IMR-90 (cell line): ENCODE measurements at regions of chr4 and their contacts with region 1.

Region 1: GRCh38 chr4:77777135-77777807 is 41.9 kb downstream of the CNOT6L start:
- DNase-seq: peak; percentile 9
- ATAC-seq: peak; percentile 16; the same call in 1 of the 2 replicates
- H3K4me3 ChIP-seq: no peak overlapping the region
- H3K27ac ChIP-seq: no peak overlapping the region
- H3K4me1 ChIP-seq: peaks cover 6% of the 10 kb centered on the region
- H3K27me3 ChIP-seq: no peaks in the 10 kb centered on the region
- CTCF ChIP-seq: no peak
- POLR2A ChIP-seq: no peak
- RAD21 ChIP-seq: no peak

Region 2: GRCh38 chr4:77711469-77711868 is 65.8 kb before region 1 on chr4:
- CTCF ChIA-PET with region 1: no interaction called
- POLR2A ChIA-PET with region 1: no interaction called
- dilution Hi-C with region 1: no loop called
- in situ Hi-C with region 1: no loop called
- intact Hi-C with region 1: no loop called
- DNase-seq: no peak
- ATAC-seq: no peak
- H3K4me3 ChIP-seq: no peak overlapping the region
- H3K27ac ChIP-seq: no peak overlapping the region
- H3K4me1 ChIP-seq: no peaks in the 10 kb centered on the region
- H3K27me3 ChIP-seq: no peaks in the 10 kb centered on the region
- CTCF ChIP-seq: no peak
- POLR2A ChIP-seq: no peak
- RAD21 ChIP-seq: no peak

Region 3: GRCh38 chr4:77734928-77735327 is 42.3 kb before region 1 on chr4:
- CTCF ChIA-PET with region 1: no interaction called
- POLR2A ChIA-PET with region 1: interaction called, 10 read pairs
- dilution Hi-C with region 1: no loop called
- in situ Hi-C with region 1: no loop called
- intact Hi-C with region 1: no loop called
- DNase-seq: peak; percentile 79
- ATAC-seq: peak; percentile 84
- H3K4me3 ChIP-seq: no peak overlapping the region
- H3K27ac ChIP-seq: no peak overlapping the region
- H3K4me1 ChIP-seq: peaks cover 2% of the 10 kb centered on the region; the same call in 1 of the 2 replicates
- H3K27me3 ChIP-seq: no peaks in the 10 kb centered on the region
- CTCF ChIP-seq: no peak
- POLR2A ChIP-seq: no peak
- RAD21 ChIP-seq: no peak

Region 4: GRCh38 chr4:77797239-77797638 is 20.0 kb after region 1 on chr4:
- CTCF ChIA-PET with region 1: no interaction called
- POLR2A ChIA-PET with region 1: no interaction called
- dilution Hi-C with region 1: no loop called
- in situ Hi-C with region 1: no loop called
- intact Hi-C with region 1: loop called (anchors 2 kb)
- DNase-seq: no peak
- ATAC-seq: no peak
- H3K4me3 ChIP-seq: no peak overlapping the region
- H3K27ac ChIP-seq: no peak overlapping the region
- H3K4me1 ChIP-seq: peaks cover 4% of the 10 kb centered on the region; the same call in 1 of the 2 replicates
- H3K27me3 ChIP-seq: no peaks in the 10 kb centered on the region
- CTCF ChIP-seq: no peak
- POLR2A ChIP-seq: no peak
- RAD21 ChIP-seq: no peak

Region 5: DNA sequence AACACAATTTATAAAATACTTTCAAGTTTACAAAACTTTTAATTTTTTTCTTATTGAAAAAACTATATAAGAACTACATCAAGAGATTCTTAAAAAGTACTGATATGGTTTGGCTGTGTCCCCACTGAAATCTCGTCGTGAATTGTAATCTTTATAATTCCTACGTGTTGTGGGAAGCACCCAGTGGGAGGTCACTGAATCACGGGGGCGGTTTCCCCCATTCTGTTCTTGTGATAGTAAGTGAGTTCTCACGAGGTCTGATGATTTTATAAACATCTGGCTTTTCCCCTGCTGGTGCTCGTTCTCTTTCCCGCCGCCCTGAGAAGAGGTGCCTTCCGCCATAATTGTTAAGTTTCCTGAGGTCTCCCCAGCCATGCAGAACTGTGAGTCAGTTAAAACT is 368.4 kb after region 1 on chr4:
- CTCF ChIA-PET with region 1: no interaction called
- POLR2A ChIA-PET with region 1: no interaction called
- dilution Hi-C with region 1: no loop called
- in situ Hi-C with region 1: no loop called
- intact Hi-C with region 1: no loop called
- DNase-seq: no peak
- ATAC-seq: no peak
- H3K4me3 ChIP-seq: no peak overlapping the region
- H3K27ac ChIP-seq: no peak overlapping the region
- H3K4me1 ChIP-seq: no peaks in the 10 kb centered on the region
- H3K27me3 ChIP-seq: no peaks in the 10 kb centered on the region
- CTCF ChIP-seq: no peak
- POLR2A ChIP-seq: no peak
- RAD21 ChIP-seq: no peak